A673 (cell line): ENCODE measurements at regions of chr10 and their contacts with region 1.

Region 1: GRCh38 chr10:89086801-89087521 is 96.4 kb downstream of the FAS start:
- DNase-seq: peak; percentile 97
- H3K4me3 ChIP-seq: peak overlapping the region; percentile 27
- H3K27ac ChIP-seq: peak overlapping the region; percentile 98
- H3K4me1 ChIP-seq: peaks cover 30% of the 10 kb centered on the region
- H3K27me3 ChIP-seq: no peaks in the 10 kb centered on the region
- CTCF ChIP-seq: no peak

Region 2: GRCh38 chr10:88880282-88881076 is 206.5 kb before region 1 on chr10:
- CTCF ChIA-PET with region 1: no interaction called
- POLR2A ChIA-PET with region 1: no interaction called
- intact Hi-C with region 1: loop called (anchors 5 kb)
- DNase-seq: peak; percentile 84
- H3K4me3 ChIP-seq: peak overlapping the region; percentile 90
- H3K27ac ChIP-seq: peak overlapping the region; percentile 92
- H3K4me1 ChIP-seq: peaks cover 61% of the 10 kb centered on the region
- H3K27me3 ChIP-seq: no peaks in the 10 kb centered on the region
- CTCF ChIP-seq: peak; percentile 46

Region 3: DNA sequence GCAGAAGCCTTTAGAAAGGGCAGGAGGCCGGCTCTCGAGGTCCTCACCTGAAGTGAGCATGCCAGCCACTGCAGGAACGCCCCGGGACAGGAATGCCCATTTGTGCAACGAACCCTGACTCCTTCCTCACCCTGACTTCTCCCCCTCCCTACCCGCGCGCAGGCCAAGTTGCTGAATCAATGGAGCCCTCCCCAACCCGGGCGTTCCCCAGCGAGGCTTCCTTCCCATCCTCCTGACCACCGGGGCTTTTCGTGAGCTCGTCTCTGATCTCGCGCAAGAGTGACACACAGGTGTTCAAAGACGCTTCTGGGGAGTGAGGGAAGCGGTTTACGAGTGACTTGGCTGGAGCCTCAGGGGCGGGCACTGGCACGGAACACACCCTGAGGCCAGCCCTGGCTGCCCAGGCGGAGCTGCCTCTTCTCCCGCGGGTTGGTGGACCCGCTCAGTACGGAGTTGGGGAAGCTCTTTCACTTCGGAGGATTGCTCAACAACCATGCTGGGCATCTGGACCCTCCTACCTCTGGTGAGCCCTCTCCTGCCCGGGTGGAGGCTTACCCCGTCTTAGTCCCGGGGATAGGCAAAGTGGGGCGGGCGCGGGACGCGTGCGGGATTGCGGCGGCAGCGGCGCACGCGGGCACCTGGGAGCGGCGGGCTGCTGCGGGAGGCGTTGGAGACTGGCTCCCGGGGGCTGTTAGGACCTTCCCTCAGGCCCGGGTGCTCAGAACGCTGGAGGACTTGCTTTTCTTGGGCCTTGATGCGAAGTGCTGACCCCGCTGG is 96.4 kb before region 1 on chr10 and contains the start of gene FAS:
- CTCF ChIA-PET with region 1: no interaction called
- POLR2A ChIA-PET with region 1: interaction called, 4 read pairs
- intact Hi-C with region 1: loop called (anchors 2 kb)
- DNase-seq: peak; percentile 66
- H3K4me3 ChIP-seq: peak within 1 kb of the TSS; percentile 89
- H3K27ac ChIP-seq: peak within 1 kb of the TSS; percentile 97
- H3K4me1 ChIP-seq: peaks cover 57% of the 10 kb centered on the region
- H3K27me3 ChIP-seq: no peaks in the 10 kb centered on the region
- CTCF ChIP-seq: no peak
- total RNA-seq, gene FAS: 30.4 and 40.3 TPM in 2 replicates

Region 4: GRCh38 chr10:89029785-89030437 is 57.0 kb before region 1 on chr10:
- CTCF ChIA-PET with region 1: no interaction called
- POLR2A ChIA-PET with region 1: no interaction called
- intact Hi-C with region 1: loop called (anchors 5 kb)
- DNase-seq: peak; percentile 83
- H3K4me3 ChIP-seq: no peak overlapping the region
- H3K27ac ChIP-seq: no peak overlapping the region
- H3K4me1 ChIP-seq: peaks cover 20% of the 10 kb centered on the region
- H3K27me3 ChIP-seq: no peaks in the 10 kb centered on the region
- CTCF ChIP-seq: peak; percentile 89

Region 5: GRCh38 chr10:89615824-89616223 is 528.9 kb after region 1 on chr10:
- CTCF ChIA-PET with region 1: no interaction called
- POLR2A ChIA-PET with region 1: no interaction called
- intact Hi-C with region 1: no loop called
- DNase-seq: no peak
- H3K4me3 ChIP-seq: no peak overlapping the region
- H3K27ac ChIP-seq: no peak overlapping the region
- H3K4me1 ChIP-seq: no peaks in the 10 kb centered on the region
- H3K27me3 ChIP-seq: no peaks in the 10 kb centered on the region
- CTCF ChIP-seq: no peak

Region 6: GRCh38 chr10:89643431-89644331 is 556.7 kb after region 1 on chr10:
- CTCF ChIA-PET with region 1: no interaction called
- POLR2A ChIA-PET with region 1: interaction called, 10 read pairs
- intact Hi-C with region 1: no loop called
- DNase-seq: peak; percentile 98
- H3K4me3 ChIP-seq: peak overlapping the region; percentile 90
- H3K27ac ChIP-seq: peak overlapping the region; percentile 92
- H3K4me1 ChIP-seq: peaks cover 39% of the 10 kb centered on the region
- H3K27me3 ChIP-seq: no peaks in the 10 kb centered on the region
- CTCF ChIP-seq: no peak